GM10248 (cell line): ENCODE measurements at regions of chr17 and their contacts with region 1.

Region 1: GRCh38 chr17:37147301-37147812 is 198.6 kb downstream of the AATF start:
- DNase-seq: peak; percentile 53
- CTCF ChIP-seq: no peak

Region 2: DNA sequence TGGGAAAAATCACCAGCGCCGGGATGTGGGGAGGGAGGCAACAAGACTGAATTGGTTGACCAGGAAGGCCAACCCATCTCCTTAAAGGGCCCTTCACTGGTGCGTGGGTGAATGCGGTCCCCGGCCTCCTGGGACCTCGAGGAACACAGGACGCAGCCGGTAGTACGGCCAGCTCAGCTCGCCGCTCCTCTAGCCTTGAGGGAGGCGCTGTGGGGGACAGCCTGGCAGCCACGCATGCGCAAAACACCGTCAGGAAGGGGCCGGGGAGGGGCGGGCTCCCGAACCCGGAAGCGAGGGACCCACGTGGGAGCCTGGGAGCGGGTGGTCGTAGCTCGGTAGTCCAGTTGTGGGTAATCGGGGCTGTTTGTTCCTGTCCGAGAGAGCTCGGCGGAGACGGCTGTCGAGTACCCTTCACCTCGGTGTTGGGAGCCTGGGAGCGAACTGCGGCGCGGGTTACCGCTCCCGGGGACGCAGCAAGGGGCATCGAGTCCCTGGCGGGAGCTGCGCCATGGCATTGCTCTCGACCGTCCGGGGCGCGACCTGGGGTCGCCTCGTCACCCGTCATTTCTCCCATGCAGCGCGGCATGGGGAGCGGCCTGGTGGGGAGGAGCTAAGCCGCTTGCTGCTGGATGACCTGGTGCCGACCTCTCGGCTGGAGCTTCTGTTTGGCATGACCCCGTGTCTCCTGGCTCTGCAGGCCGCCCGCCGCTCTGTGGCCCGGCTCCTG is 545.9 kb before region 1 on chr17 and contains the start of gene MRM1:
- CTCF ChIA-PET with region 1: no interaction called
- POLR2A ChIA-PET with region 1: no interaction called
- DNase-seq: peak; percentile 96
- CTCF ChIP-seq: peak; percentile 18

Region 3: GRCh38 chr17:37137070-37137610 is 10.2 kb before region 1 on chr17:
- CTCF ChIA-PET with region 1: interaction called, 22 read pairs
- POLR2A ChIA-PET with region 1: no interaction called
- DNase-seq: no peak
- CTCF ChIP-seq: no peak